CD4-positive, alpha-beta T cell (primary cell): ENCODE measurements at regions of chr12 and their contacts with region 1.

Region 1: DNA sequence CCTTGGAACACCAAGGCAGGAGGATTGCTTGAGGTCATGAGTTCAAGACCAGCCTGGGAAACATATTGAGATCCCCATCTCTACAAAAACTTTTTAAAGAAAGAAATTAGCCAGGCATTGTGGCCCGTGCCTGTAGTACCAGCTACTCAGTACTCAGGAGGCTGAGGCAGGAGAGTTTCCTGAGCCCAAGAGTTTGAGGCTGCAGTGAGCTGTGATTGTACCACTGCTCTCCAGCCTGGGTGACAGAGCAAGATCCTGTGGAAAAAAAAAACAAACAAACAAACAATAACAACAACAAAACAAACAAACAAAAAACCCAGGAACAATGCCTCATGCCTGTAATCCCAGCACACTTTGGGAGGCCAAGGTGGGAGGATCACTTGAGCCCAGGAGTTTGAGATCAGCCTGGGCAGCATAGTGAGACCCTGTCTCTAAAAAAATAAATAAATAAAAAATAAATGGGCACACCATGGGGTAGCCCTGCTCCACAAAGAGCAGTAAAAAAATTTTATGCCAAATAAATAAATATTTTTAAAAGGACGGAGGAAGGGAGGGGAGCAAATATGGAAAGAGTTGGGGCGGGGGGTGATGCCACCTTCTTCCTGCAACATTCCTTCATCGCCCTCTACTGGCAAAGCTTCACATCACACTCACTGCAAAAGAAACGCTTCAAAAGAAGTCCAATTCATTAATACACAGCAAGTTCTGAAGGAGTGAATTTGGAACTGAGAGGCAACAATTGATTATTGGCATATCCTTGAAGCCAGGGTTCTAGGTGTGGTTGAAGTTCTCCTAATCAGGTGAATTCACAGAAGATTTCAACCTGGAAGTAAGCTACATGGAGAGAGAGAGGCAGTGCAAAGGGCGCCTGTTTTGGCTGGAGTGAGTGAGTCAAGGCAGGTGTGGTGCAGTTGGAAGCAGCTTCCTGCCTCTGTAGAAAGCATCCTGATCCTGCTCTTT is 8.8 kb upstream of the GNPTAB start:
- DNase-seq: peak; percentile 39 to 87 (median 66)
- ATAC-seq: peak; percentile 83
- H3K4me3 ChIP-seq: no peak overlapping the region
- H3K4me3 Mint-ChIP-seq: no peak overlapping the region
- H3K27ac ChIP-seq: no peak overlapping the region
- H3K27ac Mint-ChIP-seq: no peak overlapping the region
- H3K4me1 ChIP-seq: peaks cover 14% of the 10 kb centered on the region
- H3K4me1 Mint-ChIP-seq: peaks cover 13% of the 10 kb centered on the region
- H3K27me3 ChIP-seq: no peaks in the 10 kb centered on the region
- H3K27me3 Mint-ChIP-seq: no peaks in the 10 kb centered on the region
- CTCF ChIP-seq: peak; percentile 98

Region 2: GRCh38 chr12:101564912-101565311 is 274.7 kb before region 1 on chr12:
- CTCF ChIA-PET with region 1: no interaction called
- POLR2A ChIA-PET with region 1: no interaction called
- intact Hi-C with region 1: loop called in 1 of 2 experiments (anchors 5 kb)
- DNase-seq: no peak
- ATAC-seq: no peak
- H3K4me3 ChIP-seq: no peak overlapping the region
- H3K4me3 Mint-ChIP-seq: no peak overlapping the region
- H3K27ac ChIP-seq: no peak overlapping the region
- H3K27ac Mint-ChIP-seq: no peak overlapping the region
- H3K4me1 ChIP-seq: no peaks in the 10 kb centered on the region
- H3K4me1 Mint-ChIP-seq: no peaks in the 10 kb centered on the region
- H3K27me3 ChIP-seq: peaks cover 0 to 4% of the 10 kb centered on the region in 2 experiments
- H3K27me3 Mint-ChIP-seq: peaks cover 13% of the 10 kb centered on the region
- CTCF ChIP-seq: no peak

Region 3: DNA sequence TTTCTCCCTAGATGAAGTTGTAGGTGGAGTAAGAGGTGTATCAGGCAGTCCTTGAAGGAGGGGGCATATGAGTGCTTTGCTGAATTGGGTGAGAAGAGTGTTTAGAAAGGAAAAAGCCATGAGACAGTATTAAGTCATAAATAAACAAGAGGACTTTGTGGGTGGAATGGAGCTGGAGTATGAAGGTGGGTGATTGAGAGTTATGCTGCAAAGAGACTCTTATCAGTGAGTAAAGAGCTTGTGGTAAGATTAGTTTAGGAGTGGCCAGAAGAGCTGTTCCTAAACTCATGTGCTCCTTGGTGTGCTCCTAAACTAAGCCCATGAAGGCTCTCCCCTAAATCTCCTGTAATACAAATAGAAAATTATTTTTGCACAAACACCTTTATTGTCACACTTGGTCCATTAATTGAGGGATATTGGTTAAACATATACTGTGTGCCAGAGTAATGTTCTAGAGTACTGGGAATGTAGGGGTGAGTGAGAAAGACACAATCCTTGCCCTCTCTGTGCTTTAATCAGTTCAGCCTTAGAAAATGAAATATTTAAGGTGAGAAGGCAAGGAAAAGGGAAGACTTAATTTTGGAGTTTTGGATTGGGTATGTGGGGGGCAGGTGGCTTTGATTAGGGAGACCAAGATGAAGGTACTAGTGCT is 132.3 kb before region 1 on chr12:
- CTCF ChIA-PET with region 1: no interaction called
- POLR2A ChIA-PET with region 1: no interaction called
- intact Hi-C with region 1: no loop called
- DNase-seq: no peak
- ATAC-seq: no peak
- H3K4me3 ChIP-seq: no peak overlapping the region
- H3K4me3 Mint-ChIP-seq: no peak overlapping the region
- H3K27ac ChIP-seq: no peak overlapping the region
- H3K27ac Mint-ChIP-seq: no peak overlapping the region
- H3K4me1 ChIP-seq: peaks cover 7% of the 10 kb centered on the region
- H3K4me1 Mint-ChIP-seq: peaks cover 12% of the 10 kb centered on the region
- H3K27me3 ChIP-seq: no peaks in the 10 kb centered on the region
- H3K27me3 Mint-ChIP-seq: no peaks in the 10 kb centered on the region
- CTCF ChIP-seq: no peak

Region 4: GRCh38 chr12:101773650-101774162 is 65.9 kb before region 1 on chr12:
- CTCF ChIA-PET with region 1: interaction called, 73 read pairs
- POLR2A ChIA-PET with region 1: interaction called, 5 read pairs
- intact Hi-C with region 1: loop called (anchors 1 kb)
- DNase-seq: peak; percentile 52 to 85 (median 60)
- ATAC-seq: peak; percentile 97
- H3K4me3 ChIP-seq: no peak overlapping the region
- H3K4me3 Mint-ChIP-seq: no peak overlapping the region
- H3K27ac ChIP-seq: no peak overlapping the region
- H3K27ac Mint-ChIP-seq: no peak overlapping the region
- H3K4me1 ChIP-seq: no peaks in the 10 kb centered on the region
- H3K4me1 Mint-ChIP-seq: peaks cover 5% of the 10 kb centered on the region
- H3K27me3 ChIP-seq: no peaks in the 10 kb centered on the region
- H3K27me3 Mint-ChIP-seq: no peaks in the 10 kb centered on the region
- CTCF ChIP-seq: peak; percentile 92

Region 5: GRCh38 chr12:101792051-101792931 is 47.3 kb before region 1 on chr12:
- CTCF ChIA-PET with region 1: interaction called, 11 read pairs
- POLR2A ChIA-PET with region 1: no interaction called
- intact Hi-C with region 1: no loop called
- DNase-seq: peak in 3 of 14 experiments; percentile 21 to 25 (median 25)
- ATAC-seq: peak; percentile 56
- H3K4me3 ChIP-seq: no peak overlapping the region
- H3K4me3 Mint-ChIP-seq: no peak overlapping the region
- H3K27ac ChIP-seq: no peak overlapping the region
- H3K27ac Mint-ChIP-seq: no peak overlapping the region
- H3K4me1 ChIP-seq: peaks cover 7% of the 10 kb centered on the region
- H3K4me1 Mint-ChIP-seq: peaks cover 8% of the 10 kb centered on the region
- H3K27me3 ChIP-seq: no peaks in the 10 kb centered on the region
- H3K27me3 Mint-ChIP-seq: no peaks in the 10 kb centered on the region
- CTCF ChIP-seq: peak; percentile 47